ENCODE measurements at regions of chr6 and their contacts with region 1.

Region 1: GRCh38 chr6:31597006-31597405 is 4.2 kb upstream of the NCR3 start:
- DNase-seq: peak; percentile 75
- H3K4me3 ChIP-seq: no peak overlapping the region
- H3K27ac ChIP-seq: no peak overlapping the region
- H3K4me1 ChIP-seq: no peaks in the 10 kb centered on the region
- H3K27me3 ChIP-seq: no peaks in the 10 kb centered on the region
- CTCF ChIP-seq: peak; percentile 57

Region 2: GRCh38 chr6:31403283-31403989 is 193.6 kb before region 1 on chr6 and contains the start of gene MICA:
- CTCF ChIA-PET with region 1: no interaction called
- POLR2A ChIA-PET with region 1: no interaction called
- intact Hi-C with region 1: loop called (anchors 2 kb)
- DNase-seq: peak; percentile 94
- H3K4me3 ChIP-seq: peak within 1 kb of the TSS; percentile 73
- H3K27ac ChIP-seq: peak within 1 kb of the TSS; percentile 76
- H3K4me1 ChIP-seq: peaks cover 22% of the 10 kb centered on the region
- H3K27me3 ChIP-seq: no peaks in the 10 kb centered on the region
- CTCF ChIP-seq: no peak
- total RNA-seq, gene MICA: 31.6 and 41.2 TPM in 2 replicates

Region 3: GRCh38 chr6:31493875-31494694 is 102.9 kb before region 1 on chr6:
- CTCF ChIA-PET with region 1: interaction called, 4 read pairs
- POLR2A ChIA-PET with region 1: no interaction called
- intact Hi-C with region 1: loop called (anchors 1 kb)
- DNase-seq: peak; percentile 91
- H3K4me3 ChIP-seq: peak overlapping the region; percentile 78
- H3K27ac ChIP-seq: peak overlapping the region; percentile 64
- H3K4me1 ChIP-seq: peaks cover 7% of the 10 kb centered on the region
- H3K27me3 ChIP-seq: no peaks in the 10 kb centered on the region
- CTCF ChIP-seq: peak; percentile 98

Region 4: DNA sequence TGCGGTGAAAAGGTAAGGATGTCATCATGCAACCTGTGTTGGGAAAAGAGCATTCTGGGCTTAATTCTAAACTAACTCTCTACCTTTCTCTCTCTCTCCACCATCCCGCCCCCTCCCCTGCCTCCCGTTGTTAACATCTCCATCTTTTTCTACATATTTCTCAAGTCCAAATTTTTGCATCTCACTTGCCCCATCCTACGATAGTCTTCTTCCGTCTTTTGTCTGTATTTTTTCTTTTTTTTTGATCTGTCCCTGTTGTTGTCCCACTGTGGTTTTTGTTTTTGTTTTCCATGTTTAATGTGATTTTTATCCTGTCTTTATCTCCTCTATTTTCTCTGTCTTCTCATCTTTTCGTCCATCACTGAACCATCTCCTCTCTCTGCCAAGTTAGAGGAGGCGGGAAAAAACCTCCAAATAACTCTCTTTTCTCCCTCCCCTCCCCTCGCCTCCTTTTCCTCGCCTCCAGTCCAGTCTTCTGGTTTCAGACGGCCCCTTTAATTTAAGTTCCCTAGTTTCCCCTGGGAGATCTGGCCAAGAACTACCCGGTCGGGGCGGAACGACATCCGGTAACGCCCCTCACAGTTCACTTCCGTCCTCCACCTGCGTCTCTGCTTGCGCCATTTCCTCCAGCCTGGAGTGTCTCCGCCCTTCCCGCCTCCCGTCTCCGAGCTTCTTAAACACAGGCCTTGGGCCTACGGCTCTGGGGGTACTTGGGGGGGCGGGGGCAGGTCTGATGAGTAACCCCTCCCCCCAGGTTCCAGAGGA is 49.9 kb before region 1 on chr6 and contains the start of gene NFKBIL1:
- CTCF ChIA-PET with region 1: interaction called, 31 read pairs
- POLR2A ChIA-PET with region 1: no interaction called
- intact Hi-C with region 1: loop called (anchors 1 kb)
- DNase-seq: peak; percentile 99
- H3K4me3 ChIP-seq: peak within 1 kb of the TSS; percentile 47
- H3K27ac ChIP-seq: peak within 1 kb of the TSS; percentile 71
- H3K4me1 ChIP-seq: peaks cover 11% of the 10 kb centered on the region
- H3K27me3 ChIP-seq: no peaks in the 10 kb centered on the region
- CTCF ChIP-seq: no peak
- total RNA-seq, gene NFKBIL1: 15.7 and 17.2 TPM in 2 replicates

Region 5: GRCh38 chr6:31580807-31581433 is 16.1 kb before region 1 on chr6:
- CTCF ChIA-PET with region 1: interaction called, 23 read pairs
- POLR2A ChIA-PET with region 1: no interaction called
- intact Hi-C with region 1: loop called (anchors 2 kb)
- DNase-seq: peak; percentile 86
- H3K4me3 ChIP-seq: peak overlapping the region; percentile 78
- H3K27ac ChIP-seq: peak overlapping the region; percentile 56
- H3K4me1 ChIP-seq: no peaks in the 10 kb centered on the region
- H3K27me3 ChIP-seq: no peaks in the 10 kb centered on the region
- CTCF ChIP-seq: peak; percentile 95

Measured in A673 (cell line).